Mammary epithelial cell (primary cell): ENCODE measurements at regions of chr1 and their contacts with region 1.

Region 1: DNA sequence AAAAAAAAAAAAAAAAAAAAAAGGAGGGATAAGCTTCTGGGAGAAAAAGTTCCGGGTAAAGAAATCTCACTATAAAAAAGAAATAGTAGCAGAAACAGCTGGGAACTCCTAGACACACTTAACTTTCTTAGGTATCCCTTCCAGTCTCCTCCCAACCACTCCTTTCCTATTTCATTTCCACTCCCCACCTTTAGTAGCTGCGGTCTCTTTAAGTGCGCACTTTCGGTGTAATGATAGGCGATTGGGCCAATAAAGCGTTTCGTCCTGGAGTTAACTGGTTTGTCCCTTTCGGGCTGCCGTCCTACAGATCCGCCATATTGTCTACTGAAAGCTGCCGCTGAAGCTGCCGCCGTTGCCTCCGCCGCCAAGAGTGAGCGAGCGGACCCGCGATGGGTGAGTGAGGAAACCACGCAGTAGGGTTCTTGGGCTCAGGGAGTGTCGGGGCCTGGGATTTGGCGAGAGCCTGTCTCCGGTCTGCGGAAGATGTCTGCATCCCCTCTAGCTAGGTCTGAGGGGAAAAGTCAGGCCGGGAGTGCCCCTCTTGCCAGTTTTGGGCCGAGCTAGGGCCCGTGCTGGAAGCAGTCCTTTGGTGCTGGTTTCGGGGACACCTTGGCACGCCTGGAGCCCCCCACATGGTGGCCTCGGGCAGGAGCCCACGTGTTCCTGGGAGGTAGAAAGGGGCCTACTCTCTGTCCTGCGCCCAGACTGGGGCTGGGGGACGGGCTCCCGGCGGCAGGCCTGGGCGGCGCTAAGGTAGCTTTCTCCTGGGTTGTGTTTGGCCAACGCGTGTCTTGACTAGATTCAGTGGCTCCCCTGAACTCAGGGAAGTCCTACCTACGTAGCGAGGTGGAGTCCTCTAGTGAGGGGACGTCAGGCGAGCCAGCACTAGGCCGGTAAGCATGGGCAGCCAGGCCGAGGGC is at the start of gene KPNA6:
- DNase-seq: peak; percentile 96
- H3K4me3 ChIP-seq: peak within 1 kb of the TSS; percentile 51 to 75 (median 75)
- H3K27ac ChIP-seq: peak within 1 kb of the TSS; percentile 77
- H3K4me1 ChIP-seq: no peaks in the 10 kb centered on the region
- H3K27me3 ChIP-seq: no peaks in the 10 kb centered on the region
- CTCF ChIP-seq: no peak
- total RNA-seq, gene KPNA6: 83.5 to 92.7 TPM

Region 2: GRCh38 chr1:31977385-31978131 is 130.4 kb before region 1 on chr1:
- CTCF ChIA-PET with region 1: no interaction called
- dilution Hi-C with region 1: no loop called
- in situ Hi-C with region 1: no loop called
- intact Hi-C with region 1: no loop called
- DNase-seq: peak; percentile 39
- H3K4me3 ChIP-seq: no peak overlapping the region
- H3K27ac ChIP-seq: no peak overlapping the region
- H3K4me1 ChIP-seq: peaks cover 3% of the 10 kb centered on the region
- H3K27me3 ChIP-seq: no peaks in the 10 kb centered on the region
- CTCF ChIP-seq: peak; percentile 23 to 51

Region 3: DNA sequence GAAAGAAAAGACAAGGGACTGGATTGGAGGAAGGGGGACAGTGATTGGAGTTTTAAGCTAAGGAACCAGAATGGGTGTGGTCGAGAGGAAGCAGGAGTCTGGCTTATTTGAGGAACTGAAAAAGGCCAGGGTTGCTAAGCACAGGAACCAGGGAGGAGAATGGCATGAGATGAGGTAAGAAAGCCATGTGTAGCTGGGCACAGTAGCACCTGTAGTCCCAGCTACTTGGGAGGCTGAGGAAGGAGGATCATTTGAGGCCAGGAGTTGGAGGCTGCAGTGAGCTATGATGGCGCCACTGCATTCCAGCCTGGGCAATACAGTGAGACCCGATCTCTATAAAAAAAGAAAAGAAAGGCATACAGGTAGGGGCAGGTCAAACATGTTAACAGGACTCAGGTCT is 102.5 kb before region 1 on chr1:
- CTCF ChIA-PET with region 1: no interaction called
- dilution Hi-C with region 1: no loop called
- in situ Hi-C with region 1: no loop called
- intact Hi-C with region 1: no loop called
- DNase-seq: no peak
- H3K4me3 ChIP-seq: no peak overlapping the region
- H3K27ac ChIP-seq: no peak overlapping the region
- H3K4me1 ChIP-seq: no peaks in the 10 kb centered on the region
- H3K27me3 ChIP-seq: no peaks in the 10 kb centered on the region
- CTCF ChIP-seq: no peak

Region 4: DNA sequence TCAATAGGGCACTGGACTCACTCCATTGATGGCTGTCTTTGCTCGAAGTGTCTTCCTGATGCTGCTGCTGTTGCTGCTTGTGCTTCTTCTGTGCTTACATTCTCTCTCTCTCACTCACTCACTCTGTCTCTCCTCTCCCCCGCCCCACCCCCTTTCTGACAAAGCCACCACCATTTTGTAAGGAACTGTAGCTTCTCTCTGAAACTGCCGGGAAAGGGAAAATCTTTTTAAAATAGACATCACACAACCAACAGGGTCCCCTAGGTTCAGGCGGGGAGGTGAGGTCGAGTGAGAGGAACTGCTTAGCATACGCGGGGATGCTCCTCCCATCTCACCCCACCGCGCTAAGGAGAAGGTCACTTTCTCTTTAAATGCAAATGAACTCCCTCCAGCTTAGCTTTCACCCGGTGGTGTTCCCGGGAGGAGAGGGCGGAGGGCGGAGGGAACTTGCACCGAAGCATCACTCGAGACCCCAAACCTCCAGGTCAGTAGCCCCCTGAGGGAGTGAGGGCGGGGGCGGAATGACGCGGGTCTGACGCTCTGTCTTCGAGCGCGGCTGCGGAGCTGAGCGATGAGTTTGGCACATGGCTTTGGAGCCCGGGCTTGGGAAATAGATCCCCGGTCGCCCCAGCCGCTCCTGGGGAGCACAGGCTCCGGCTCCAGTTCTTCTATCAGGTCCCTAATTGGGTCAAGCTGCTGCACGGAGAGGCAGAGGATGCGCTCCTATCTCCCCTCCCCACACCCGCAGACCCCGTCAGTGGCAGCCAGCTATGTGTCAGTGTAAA is 92.4 kb after region 1 on chr1 and contains the start of gene CCDC28B:
- CTCF ChIA-PET with region 1: no interaction called
- dilution Hi-C with region 1: no loop called
- in situ Hi-C with region 1: no loop called
- intact Hi-C with region 1: loop called (anchors 5 kb)
- DNase-seq: peak; percentile 56
- H3K4me3 ChIP-seq: peak within 1 kb of the TSS; percentile 53 to 67 (median 56)
- H3K27ac ChIP-seq: peak within 1 kb of the TSS; percentile 31
- H3K4me1 ChIP-seq: peaks cover 21% of the 10 kb centered on the region
- H3K27me3 ChIP-seq: no peaks in the 10 kb centered on the region
- CTCF ChIP-seq: no peak
- total RNA-seq, gene CCDC28B: 1.7 to 6.9 TPM